ENCODE measurements at regions of chr18 and their contacts with region 1.

Region 1: GRCh38 chr18:49510393-49511115 is 23.5 kb upstream of the C18orf32 start:
- DNase-seq: peak; percentile 53
- ATAC-seq: peak; percentile 78
- H3K4me3 Mint-ChIP-seq: no peak overlapping the region
- H3K27ac Mint-ChIP-seq: no peak overlapping the region
- H3K4me1 Mint-ChIP-seq: peaks cover 12% of the 10 kb centered on the region
- H3K27me3 Mint-ChIP-seq: no peaks in the 10 kb centered on the region
- CTCF ChIP-seq: peak; percentile 70

Region 2: GRCh38 chr18:49447810-49448745 is 62.5 kb before region 1 on chr18:
- CTCF ChIA-PET with region 1: no interaction called
- POLR2A ChIA-PET with region 1: no interaction called
- DNase-seq: peak; percentile 51
- ATAC-seq: peak; percentile 99
- H3K4me3 Mint-ChIP-seq: no peak overlapping the region
- H3K27ac Mint-ChIP-seq: no peak overlapping the region
- H3K4me1 Mint-ChIP-seq: peaks cover 2% of the 10 kb centered on the region
- H3K27me3 Mint-ChIP-seq: no peaks in the 10 kb centered on the region; the same call in 1 of the 2 replicates
- CTCF ChIP-seq: peak; percentile 66

Region 3: GRCh38 chr18:49494660-49495059 is 15.9 kb before region 1 on chr18:
- CTCF ChIA-PET with region 1: interaction called, 17 read pairs
- POLR2A ChIA-PET with region 1: no interaction called
- DNase-seq: no peak
- ATAC-seq: no peak
- H3K4me3 Mint-ChIP-seq: no peak overlapping the region
- H3K27ac Mint-ChIP-seq: no peak overlapping the region
- H3K4me1 Mint-ChIP-seq: peaks cover 63% of the 10 kb centered on the region
- H3K27me3 Mint-ChIP-seq: no peaks in the 10 kb centered on the region
- CTCF ChIP-seq: no peak

Region 4: GRCh38 chr18:49500201-49500921 is 10.2 kb before region 1 on chr18:
- CTCF ChIA-PET with region 1: interaction called, 17 read pairs
- POLR2A ChIA-PET with region 1: no interaction called
- DNase-seq: no peak
- ATAC-seq: peak; percentile 76
- H3K4me3 Mint-ChIP-seq: peak overlapping the region; percentile 38
- H3K27ac Mint-ChIP-seq: peak overlapping the region; percentile 76; the same call in 1 of the 2 replicates
- H3K4me1 Mint-ChIP-seq: peaks cover 32% of the 10 kb centered on the region
- H3K27me3 Mint-ChIP-seq: no peaks in the 10 kb centered on the region
- CTCF ChIP-seq: no peak

Region 5: DNA sequence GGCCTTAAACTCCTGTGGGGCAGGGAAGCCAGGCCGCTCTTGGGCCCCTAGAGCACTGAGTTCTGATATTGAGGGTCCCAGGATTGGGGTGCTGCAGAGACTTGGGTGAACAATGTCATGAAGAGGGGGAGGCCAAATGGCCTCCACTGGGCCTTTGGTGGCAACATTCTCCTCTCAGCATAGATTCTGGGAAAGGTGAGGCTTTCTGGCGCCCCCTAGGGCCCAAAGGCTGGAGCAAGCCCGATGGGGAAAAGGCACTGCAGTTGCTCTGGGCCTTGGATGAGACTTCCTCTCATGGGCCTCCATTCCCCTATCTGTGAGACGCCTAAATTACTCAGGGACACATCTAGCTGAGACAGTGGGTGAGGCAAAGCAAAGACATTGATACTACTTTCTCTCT is 218.0 kb after region 1 on chr18:
- CTCF ChIA-PET with region 1: interaction called, 12 read pairs
- POLR2A ChIA-PET with region 1: no interaction called
- DNase-seq: peak; percentile 81
- ATAC-seq: peak; percentile 38
- H3K4me3 Mint-ChIP-seq: no peak overlapping the region
- H3K27ac Mint-ChIP-seq: no peak overlapping the region
- H3K4me1 Mint-ChIP-seq: peaks cover 38% of the 10 kb centered on the region
- H3K27me3 Mint-ChIP-seq: no peaks in the 10 kb centered on the region
- CTCF ChIP-seq: peak; percentile 69

Region 6: DNA sequence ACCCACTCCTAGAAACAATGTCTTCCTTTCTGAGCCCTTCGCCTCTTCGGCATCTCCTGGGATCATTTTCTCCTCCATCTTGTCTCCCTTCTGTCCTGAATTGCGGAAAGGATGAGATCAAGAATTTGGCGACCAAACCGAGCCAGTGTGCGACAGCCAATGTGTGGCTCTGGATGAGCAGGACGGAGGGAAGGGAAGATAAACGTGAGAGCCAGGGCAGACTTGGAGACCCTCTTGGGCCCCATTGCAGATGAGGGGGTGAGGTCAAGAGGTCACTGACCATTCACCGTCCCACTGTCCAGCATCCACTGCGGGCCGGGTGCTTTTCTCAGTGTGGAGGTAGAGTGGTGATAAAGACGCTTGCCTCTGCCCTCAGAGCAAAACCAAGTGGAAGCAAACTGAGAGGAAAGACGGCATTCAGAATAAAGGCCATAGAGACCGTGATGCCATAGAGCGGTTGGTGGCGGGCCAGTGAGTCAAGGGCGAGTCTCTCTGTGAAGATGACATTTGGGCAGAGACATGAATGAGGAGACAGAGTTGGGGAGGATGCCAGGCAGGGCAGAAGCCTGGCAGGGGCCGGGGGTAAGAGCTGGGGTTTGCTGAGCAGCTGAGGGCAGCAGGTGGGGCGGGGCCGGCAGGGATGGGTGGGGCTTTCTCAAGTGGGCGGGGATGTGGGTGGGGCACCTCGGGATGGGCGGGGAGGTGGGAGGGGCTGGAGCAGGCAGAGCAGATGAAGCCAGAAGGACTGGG is 247.1 kb after region 1 on chr18:
- CTCF ChIA-PET with region 1: interaction called, 14 read pairs
- POLR2A ChIA-PET with region 1: no interaction called
- DNase-seq: peak; percentile 63
- ATAC-seq: peak; percentile 68
- H3K4me3 Mint-ChIP-seq: no peak overlapping the region
- H3K27ac Mint-ChIP-seq: peak overlapping the region; percentile 94
- H3K4me1 Mint-ChIP-seq: peaks cover 42% of the 10 kb centered on the region
- H3K27me3 Mint-ChIP-seq: no peaks in the 10 kb centered on the region
- CTCF ChIP-seq: no peak

Region 7: GRCh38 chr18:49768051-49768391 is 257.5 kb after region 1 on chr18:
- CTCF ChIA-PET with region 1: interaction called, 25 read pairs
- POLR2A ChIA-PET with region 1: no interaction called
- DNase-seq: peak; percentile 80
- ATAC-seq: peak; percentile 94
- H3K4me3 Mint-ChIP-seq: no peak overlapping the region
- H3K27ac Mint-ChIP-seq: no peak overlapping the region
- H3K4me1 Mint-ChIP-seq: peaks cover 10% of the 10 kb centered on the region
- H3K27me3 Mint-ChIP-seq: no peaks in the 10 kb centered on the region
- CTCF ChIP-seq: peak; percentile 39; the same call in 1 of the 2 replicates

Region 8: DNA sequence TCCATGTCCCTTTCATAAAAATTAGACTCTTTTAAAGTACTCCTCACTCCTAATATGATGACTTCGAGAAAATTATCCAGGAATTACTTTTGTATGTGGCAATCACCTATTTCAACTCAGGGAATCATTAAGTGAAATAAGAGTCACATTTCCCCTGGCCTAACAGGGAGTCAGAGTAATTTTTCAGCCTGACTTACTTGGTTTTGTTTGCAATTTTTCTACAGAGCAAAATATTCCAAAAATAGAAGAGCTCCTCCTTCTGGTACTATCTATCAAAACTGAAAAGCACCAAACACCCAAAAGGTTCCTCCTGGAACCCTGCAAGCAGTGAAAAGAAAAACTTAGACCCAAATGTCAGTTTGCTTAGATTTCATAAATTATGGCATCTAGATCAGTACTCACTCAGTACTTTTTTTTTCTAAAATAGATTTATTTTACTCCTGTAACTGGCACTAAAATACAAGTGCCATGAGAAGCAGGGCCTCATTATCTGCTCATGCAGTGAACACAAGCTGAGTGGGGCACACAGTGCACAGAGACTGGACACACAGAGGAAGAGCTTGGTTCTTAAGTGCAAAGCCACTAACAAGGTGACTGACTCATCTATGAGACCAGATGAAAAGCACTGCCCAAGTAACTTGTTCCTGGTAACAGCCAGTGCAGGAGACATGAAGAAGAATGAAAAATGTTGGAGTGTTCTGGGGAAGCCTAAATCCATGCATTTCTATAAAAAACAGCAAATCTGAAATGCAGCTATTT is 274.1 kb after region 1 on chr18:
- CTCF ChIA-PET with region 1: interaction called, 10 read pairs
- POLR2A ChIA-PET with region 1: no interaction called
- DNase-seq: no peak
- ATAC-seq: no peak
- H3K4me3 Mint-ChIP-seq: no peak overlapping the region
- H3K27ac Mint-ChIP-seq: no peak overlapping the region
- H3K4me1 Mint-ChIP-seq: no peaks in the 10 kb centered on the region
- H3K27me3 Mint-ChIP-seq: no peaks in the 10 kb centered on the region
- CTCF ChIP-seq: no peak